CD4-positive, alpha-beta T cell (primary cell): ENCODE measurements at regions of chr2 and their contacts with region 1.

Region 1: DNA sequence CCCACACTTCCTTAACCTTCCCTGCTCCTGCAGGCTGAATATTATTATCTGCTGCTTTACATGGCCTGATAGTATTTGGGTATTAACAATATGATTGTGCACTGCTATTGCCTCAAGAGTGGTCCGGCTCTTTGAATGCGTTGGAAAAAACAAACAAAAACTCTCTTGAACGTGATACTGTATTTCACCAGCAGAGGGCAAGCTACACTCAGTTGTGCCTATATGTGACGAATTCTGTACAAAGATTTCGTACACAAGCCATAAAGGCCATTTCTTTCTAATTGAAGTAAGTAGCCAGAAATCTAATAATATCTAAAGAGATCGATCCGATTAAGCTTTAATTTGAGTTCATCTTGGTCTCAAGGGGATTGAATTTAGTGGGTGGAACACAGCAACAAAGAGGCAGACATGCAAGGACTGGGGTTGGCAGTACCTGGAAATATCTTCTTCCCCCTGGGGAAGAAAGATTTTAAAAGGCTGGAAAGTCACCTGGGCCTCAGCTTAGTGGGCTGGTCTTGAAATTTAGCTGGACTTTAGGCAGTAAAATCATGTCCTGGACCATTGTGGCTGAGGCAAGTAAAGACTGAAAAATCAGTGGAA is 49.3 kb upstream of the RAB6D start:
- DNase-seq: peak in 4 of 14 experiments; percentile 30 to 66 (median 56)
- ATAC-seq: peak; percentile 29
- H3K4me3 ChIP-seq: no peak overlapping the region
- H3K4me3 Mint-ChIP-seq: no peak overlapping the region
- H3K27ac ChIP-seq: no peak overlapping the region
- H3K27ac Mint-ChIP-seq: no peak overlapping the region
- H3K4me1 ChIP-seq: no peaks in the 10 kb centered on the region
- H3K4me1 Mint-ChIP-seq: no peaks in the 10 kb centered on the region
- H3K27me3 ChIP-seq: peaks cover 6 to 16% of the 10 kb centered on the region in 2 experiments
- H3K27me3 Mint-ChIP-seq: peaks cover 53% of the 10 kb centered on the region
- CTCF ChIP-seq: peak; percentile 89

Region 2: DNA sequence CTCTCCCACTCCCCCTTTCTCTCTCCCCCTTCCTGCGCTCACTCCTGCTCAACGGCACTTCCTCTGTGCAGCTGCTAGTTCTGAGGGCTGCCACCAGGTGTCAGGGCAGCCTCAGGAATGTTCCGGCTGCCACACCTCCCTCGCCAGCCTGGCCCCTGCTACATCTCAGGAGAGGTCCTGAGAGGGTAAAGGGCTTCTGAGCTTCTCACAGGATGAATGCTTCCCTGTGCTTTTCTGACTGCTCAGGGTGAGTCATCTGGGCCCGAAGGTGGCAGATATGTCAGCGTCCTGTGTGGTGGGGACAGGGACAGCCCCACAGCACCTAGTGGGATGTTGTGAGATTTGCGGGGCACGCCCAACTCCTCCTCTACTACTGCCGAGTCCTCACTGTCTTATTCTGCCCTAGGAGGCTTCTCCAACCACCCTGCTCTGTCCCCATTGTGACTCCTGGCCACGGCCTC is 259.1 kb before region 1 on chr2:
- CTCF ChIA-PET with region 1: interaction called, 3 read pairs
- POLR2A ChIA-PET with region 1: no interaction called
- intact Hi-C with region 1: loop called (anchors 5 kb)
- DNase-seq: peak; percentile 41 to 82 (median 56)
- ATAC-seq: peak; percentile 88
- H3K4me3 ChIP-seq: no peak overlapping the region
- H3K4me3 Mint-ChIP-seq: no peak overlapping the region
- H3K27ac ChIP-seq: no peak overlapping the region
- H3K27ac Mint-ChIP-seq: no peak overlapping the region
- H3K4me1 ChIP-seq: peaks cover 20% of the 10 kb centered on the region
- H3K4me1 Mint-ChIP-seq: peaks cover 7% of the 10 kb centered on the region
- H3K27me3 ChIP-seq: no peaks in the 10 kb centered on the region
- H3K27me3 Mint-ChIP-seq: no peaks in the 10 kb centered on the region
- CTCF ChIP-seq: peak; percentile 76

Region 3: DNA sequence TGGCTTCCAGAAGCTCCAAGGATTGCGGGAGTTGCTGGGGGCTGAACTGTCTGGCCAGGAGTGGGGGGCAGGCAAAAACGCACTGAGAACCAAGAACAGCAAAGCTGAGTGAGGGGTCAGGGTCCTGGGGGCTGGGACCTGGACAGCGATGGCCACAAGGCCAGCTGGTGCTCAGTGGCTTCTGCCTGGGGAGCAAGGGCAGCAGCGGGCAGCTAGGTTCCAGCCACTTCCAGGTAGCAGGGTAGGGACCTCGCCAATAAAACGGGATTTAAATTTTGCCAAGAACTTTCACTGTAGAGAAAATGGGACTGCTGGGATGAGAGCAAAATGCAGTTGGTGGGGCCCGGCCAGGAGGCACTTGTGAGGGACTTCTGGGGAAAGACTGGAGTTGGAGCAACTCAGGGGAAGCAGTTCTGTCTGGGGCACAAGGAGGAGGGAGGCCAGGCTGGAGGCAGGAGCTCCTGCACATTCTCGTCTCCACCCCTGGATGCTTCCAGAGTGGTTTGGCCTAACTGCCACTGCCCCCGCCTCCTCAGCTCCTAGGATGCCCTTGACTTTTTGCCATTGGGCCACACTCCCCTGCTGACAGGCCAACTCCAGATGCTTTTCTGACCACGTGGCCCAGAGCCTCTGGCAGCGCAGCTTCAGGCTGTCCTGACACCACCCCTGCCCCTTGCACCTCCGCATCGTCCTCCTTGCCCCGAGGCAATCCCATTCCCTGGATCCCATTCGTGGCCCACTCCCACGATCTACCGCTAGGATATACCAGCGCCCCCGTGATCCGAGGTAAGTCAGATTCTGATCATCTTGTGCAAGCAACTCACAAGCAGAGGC is 108.9 kb after region 1 on chr2:
- CTCF ChIA-PET with region 1: no interaction called
- POLR2A ChIA-PET with region 1: no interaction called
- intact Hi-C with region 1: loop called in 1 of 2 experiments (anchors 10 kb)
- DNase-seq: no peak
- ATAC-seq: no peak
- H3K4me3 ChIP-seq: no peak overlapping the region
- H3K4me3 Mint-ChIP-seq: peak overlapping the region; percentile 20
- H3K27ac ChIP-seq: no peak overlapping the region
- H3K27ac Mint-ChIP-seq: no peak overlapping the region
- H3K4me1 ChIP-seq: peaks cover 2% of the 10 kb centered on the region
- H3K4me1 Mint-ChIP-seq: no peaks in the 10 kb centered on the region
- H3K27me3 ChIP-seq: no peaks in the 10 kb centered on the region
- H3K27me3 Mint-ChIP-seq: no peaks in the 10 kb centered on the region
- CTCF ChIP-seq: no peak

Region 4: DNA sequence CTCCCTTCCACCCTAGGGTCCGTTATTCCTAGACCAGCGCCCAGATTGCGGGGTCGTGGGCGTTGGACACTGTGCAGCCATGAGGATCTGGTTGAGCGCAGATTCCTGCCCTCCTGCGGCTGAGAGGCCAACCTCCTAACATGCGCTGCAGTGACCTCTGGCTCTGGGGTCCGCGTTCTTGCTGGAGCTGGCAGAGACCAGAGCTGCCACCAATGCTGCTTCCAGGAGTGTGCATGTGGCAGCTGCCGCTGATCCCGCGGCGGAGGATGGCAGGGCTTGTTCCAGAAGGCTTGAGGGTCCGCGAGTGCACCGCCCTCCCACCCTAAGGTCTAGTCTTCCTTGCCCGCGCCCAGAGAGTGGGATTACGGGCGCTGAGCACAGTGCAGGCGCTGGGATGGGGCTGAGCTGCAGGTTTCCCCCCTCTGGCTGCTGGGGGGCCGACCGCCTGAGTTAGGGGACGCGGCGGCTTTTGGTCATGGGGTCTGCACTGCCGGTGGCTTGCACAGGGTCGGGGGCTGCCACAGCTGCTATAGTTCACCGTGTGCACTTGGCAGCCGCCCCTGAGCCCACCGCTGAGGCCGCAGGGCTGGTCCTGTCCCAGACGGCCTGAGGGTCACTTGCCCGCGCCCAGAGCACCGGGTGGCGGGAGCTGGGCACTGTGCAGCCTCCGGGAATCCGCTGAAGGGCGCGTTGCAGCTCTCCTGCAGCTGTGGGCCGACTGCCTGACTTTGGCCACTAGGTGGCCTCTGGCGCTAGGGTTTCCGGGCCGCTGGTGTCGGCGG is 260.3 kb after region 1 on chr2:
- CTCF ChIA-PET with region 1: interaction called, 8 read pairs
- POLR2A ChIA-PET with region 1: no interaction called
- intact Hi-C with region 1: loop called (anchors 2 kb)
- DNase-seq: peak in 12 of 14 experiments; percentile 40 to 74 (median 52)
- ATAC-seq: no peak
- H3K4me3 ChIP-seq: peak overlapping the region; percentile 44
- H3K4me3 Mint-ChIP-seq: peak overlapping the region; percentile 69
- H3K27ac ChIP-seq: no peak overlapping the region
- H3K27ac Mint-ChIP-seq: no peak overlapping the region
- H3K4me1 ChIP-seq: peaks cover 21% of the 10 kb centered on the region
- H3K4me1 Mint-ChIP-seq: peaks cover 13% of the 10 kb centered on the region
- H3K27me3 ChIP-seq: peaks cover 24 to 34% of the 10 kb centered on the region in 2 experiments
- H3K27me3 Mint-ChIP-seq: peaks cover 62% of the 10 kb centered on the region
- CTCF ChIP-seq: peak; percentile 80

Region 5: DNA sequence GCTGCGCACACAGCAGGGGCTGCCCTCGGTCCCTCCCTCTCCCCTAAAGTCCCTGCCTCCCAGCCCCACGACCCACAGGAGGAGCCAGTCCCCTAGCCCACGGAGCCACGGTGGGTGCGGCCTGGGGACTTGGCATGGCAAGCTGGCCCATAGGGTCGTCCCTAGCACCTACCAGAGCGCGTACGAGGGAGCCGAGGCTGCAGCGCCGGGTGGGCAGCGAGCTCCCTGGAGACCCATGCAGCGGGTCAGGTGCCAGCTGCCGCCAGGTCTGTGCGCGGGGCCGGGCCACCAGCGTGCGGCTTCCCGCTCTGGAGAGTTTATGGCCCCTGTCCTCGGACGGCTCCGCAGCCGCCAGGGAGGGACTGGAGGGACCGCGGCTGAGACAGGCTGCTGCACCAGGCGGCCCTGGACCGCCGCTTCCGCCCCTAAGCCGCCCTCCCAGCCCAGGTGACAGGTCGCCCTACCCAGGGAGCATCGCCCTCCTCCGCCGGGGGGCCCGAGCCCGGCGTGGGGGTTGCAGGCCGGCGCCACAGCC is 388.0 kb after region 1 on chr2:
- CTCF ChIA-PET with region 1: interaction called, 5 read pairs
- POLR2A ChIA-PET with region 1: no interaction called
- intact Hi-C with region 1: loop called (anchors 5 kb)
- DNase-seq: peak in 1 of 14 experiments; percentile 34
- ATAC-seq: no peak
- H3K4me3 ChIP-seq: no peak overlapping the region
- H3K4me3 Mint-ChIP-seq: no peak overlapping the region
- H3K27ac ChIP-seq: no peak overlapping the region
- H3K27ac Mint-ChIP-seq: no peak overlapping the region
- H3K4me1 ChIP-seq: peaks cover 7% of the 10 kb centered on the region
- H3K4me1 Mint-ChIP-seq: no peaks in the 10 kb centered on the region
- H3K27me3 ChIP-seq: no peaks in the 10 kb centered on the region
- H3K27me3 Mint-ChIP-seq: peaks cover 10% of the 10 kb centered on the region
- CTCF ChIP-seq: no peak